GM13977 (cell line): ENCODE measurements at regions of chr15 and their contacts with region 1.

Region 1: GRCh38 chr15:101008158-101009139 is 89.3 kb downstream of the LRRK1 start:
- DNase-seq: peak; percentile 90
- CTCF ChIP-seq: peak; percentile 99

Region 2: DNA sequence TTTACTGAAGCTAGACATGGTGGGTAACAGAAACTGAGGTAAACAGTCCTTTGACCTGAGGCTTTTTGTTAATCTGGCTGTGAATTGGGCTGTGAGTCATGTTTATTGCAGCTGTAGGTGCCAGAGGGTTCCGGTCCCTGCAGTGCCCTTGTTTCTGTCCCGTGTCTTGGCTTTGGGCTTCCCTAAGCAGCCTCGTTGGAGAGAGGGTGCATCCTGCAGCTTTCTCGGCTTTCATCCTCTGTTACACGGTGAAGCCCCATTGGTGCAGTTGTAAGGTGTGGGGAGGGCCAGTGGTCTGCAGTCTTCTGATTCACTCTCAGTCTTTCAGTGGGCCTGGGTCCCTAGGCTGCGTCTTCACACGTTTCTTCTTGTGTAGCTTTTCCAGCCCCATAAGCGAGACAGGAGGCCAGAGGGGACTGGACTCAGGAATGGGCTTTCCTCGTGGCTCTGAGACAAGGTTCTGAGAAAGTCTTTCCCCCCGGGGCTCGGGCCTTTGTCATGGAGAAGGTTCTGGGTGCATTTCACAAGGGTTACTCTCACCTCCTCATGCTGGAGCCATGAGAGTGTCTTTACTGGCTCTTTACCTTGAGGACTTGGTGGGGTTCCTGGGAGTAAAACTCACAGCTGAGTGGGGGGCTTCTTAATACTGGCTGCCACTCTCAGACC is 372.9 kb before region 1 on chr15:
- in situ Hi-C with region 1: loop called (anchors 10 kb)
- DNase-seq: no peak
- CTCF ChIP-seq: no peak

Region 3: GRCh38 chr15:101179341-101180153 is 171.1 kb after region 1 on chr15:
- in situ Hi-C with region 1: no loop called
- DNase-seq: no peak
- CTCF ChIP-seq: no peak